ENCODE measurements at regions of chr1 and their contacts with region 1.

Region 1: GRCh38 chr1:44002606-44003157 is 11.3 kb downstream of the CCDC24 start:
- DNase-seq: no peak
- ATAC-seq: no peak
- H3K4me3 ChIP-seq: no peak overlapping the region
- H3K27ac ChIP-seq: no peak overlapping the region
- H3K4me1 ChIP-seq: no peaks in the 10 kb centered on the region
- H3K27me3 ChIP-seq: no peaks in the 10 kb centered on the region
- CTCF ChIP-seq: no peak

Region 2: DNA sequence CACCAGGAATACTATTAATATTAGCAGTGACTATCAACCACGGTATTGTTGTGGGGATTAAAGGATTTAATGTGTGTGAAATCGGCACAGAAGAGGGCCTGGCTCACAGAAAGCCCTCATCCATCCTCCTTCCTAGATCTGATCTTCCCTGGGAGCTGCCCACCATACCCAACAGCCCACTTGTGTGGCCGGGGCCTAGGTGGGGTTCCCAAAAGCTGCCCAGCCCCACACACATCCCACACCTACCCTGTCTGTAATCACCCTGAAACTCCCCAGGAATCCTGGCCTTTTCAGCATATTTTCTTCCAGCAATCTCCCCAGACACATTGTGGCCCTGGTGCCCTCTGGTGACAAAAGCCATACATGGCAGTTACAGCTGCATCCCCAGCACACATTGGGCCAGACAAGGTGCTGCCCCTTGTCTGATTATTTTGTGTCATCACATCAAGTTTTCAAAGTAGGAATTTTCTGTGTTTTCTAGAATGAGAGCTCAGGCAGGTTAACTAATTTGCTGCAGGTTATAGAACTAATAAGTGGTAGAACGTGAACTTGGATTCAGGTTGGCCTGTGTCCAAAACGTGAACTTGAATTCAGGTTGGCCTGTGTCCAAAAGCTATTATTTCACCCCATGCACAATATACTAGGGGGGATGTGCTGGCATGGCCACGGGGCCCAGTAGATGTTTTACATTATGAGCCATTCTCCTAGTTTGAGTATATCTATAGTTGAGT is 33.9 kb after region 1 on chr1:
- intact Hi-C with region 1: loop called in 1 of 3 experiments (anchors 5 kb)
- DNase-seq: peak; percentile 66 to 85 (median 72)
- ATAC-seq: peak; percentile 78 to 94 (median 90)
- H3K4me3 ChIP-seq: no peak overlapping the region
- H3K27ac ChIP-seq: peak overlapping the region in 3 of 4 donors; percentile 31 to 53 (median 35)
- H3K4me1 ChIP-seq: peaks cover 0 to 10% (median 0%) of the 10 kb centered on the region in 3 donors
- H3K27me3 ChIP-seq: no peaks in the 10 kb centered on the region
- CTCF ChIP-seq: peak; percentile 53 to 78 (median 75)

Region 3: GRCh38 chr1:44263568-44264450 is 261.1 kb after region 1 on chr1:
- intact Hi-C with region 1: no loop called
- DNase-seq: no peak
- ATAC-seq: peak in 2 of 4 donors; percentile 32 to 41
- H3K4me3 ChIP-seq: no peak overlapping the region
- H3K27ac ChIP-seq: no peak overlapping the region
- H3K4me1 ChIP-seq: no peaks in the 10 kb centered on the region
- H3K27me3 ChIP-seq: no peaks in the 10 kb centered on the region
- CTCF ChIP-seq: no peak

Measured in pancreas (tissue), 10 donors.